ENCODE measurements at regions of chr16 and their contacts with region 1.

Region 1: DNA sequence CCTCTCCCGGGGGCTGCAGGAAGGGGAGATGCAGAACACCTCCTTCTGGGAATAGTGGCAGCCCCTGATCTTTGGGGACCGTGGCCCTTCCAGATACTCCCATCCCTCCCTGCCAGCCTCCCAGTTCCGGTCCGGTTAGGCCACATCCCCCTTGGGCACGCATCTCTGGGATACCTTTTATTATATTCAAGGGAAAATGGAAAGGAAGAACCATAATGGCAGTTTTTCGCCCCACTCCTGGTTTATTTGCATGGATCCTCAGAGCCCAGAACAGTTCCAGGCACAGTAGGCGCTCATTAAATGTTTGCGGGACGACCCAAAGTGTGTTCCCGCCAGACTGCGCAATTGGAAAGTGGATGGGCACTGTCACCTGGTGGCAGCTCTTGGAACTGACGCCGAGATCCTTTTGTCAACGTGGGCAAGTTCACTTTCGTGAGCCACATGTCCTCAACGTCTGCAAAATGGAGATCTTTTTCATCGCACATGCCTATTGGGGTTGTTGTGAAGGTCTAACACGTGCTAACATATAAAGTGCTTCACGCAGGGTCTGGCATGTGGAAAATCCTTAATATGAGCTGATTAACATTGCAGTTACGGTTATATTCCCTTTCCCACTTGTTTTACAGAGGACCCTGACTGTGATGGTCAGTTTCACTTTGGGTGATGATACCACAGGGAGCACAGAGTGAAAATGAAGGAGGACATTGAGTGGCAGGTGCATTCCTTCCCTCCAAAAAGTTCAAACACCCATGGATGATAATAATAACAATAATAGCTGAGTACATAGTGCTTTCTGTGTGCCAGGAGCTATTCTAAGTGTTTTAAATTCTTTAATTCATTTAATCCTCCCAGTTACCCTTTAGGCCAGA is 1.7 kb upstream of the GPRC5B start:
- DNase-seq: peak; percentile 83

Region 2: DNA sequence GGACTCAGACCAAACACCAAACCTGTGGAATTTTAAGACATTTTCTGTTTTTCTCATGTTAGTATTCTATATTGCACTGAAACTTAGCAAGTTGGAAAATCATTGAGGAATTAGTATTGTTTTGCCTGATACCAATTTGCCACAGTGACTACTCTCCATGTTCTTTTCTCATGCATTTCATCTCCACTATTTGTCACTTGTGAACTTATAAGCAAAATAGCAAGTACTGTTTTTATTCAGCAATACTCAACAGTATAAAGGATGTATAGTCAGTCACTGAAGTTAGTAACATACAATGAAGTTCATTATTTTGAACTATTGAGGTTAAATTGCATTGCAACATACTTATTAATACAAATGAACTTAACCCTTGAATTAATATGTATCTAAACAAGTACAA is 336.6 kb before region 1 on chr16:
- in situ Hi-C with region 1: no loop called
- DNase-seq: no peak

Region 3: GRCh38 chr16:19601083-19601976 is 285.0 kb before region 1 on chr16:
- in situ Hi-C with region 1: loop called (anchors 25 kb)
- DNase-seq: peak; percentile 71

Region 4: GRCh38 chr16:19783363-19784182 is 102.7 kb before region 1 on chr16:
- in situ Hi-C with region 1: no loop called
- DNase-seq: no peak

Region 5: GRCh38 chr16:19959736-19960135 is 73.4 kb after region 1 on chr16:
- in situ Hi-C with region 1: no loop called
- DNase-seq: no peak

Measured in G401 (cell line).